H1 (cell line): ENCODE measurements at regions of chr7 and their contacts with region 1.

Region 1: DNA sequence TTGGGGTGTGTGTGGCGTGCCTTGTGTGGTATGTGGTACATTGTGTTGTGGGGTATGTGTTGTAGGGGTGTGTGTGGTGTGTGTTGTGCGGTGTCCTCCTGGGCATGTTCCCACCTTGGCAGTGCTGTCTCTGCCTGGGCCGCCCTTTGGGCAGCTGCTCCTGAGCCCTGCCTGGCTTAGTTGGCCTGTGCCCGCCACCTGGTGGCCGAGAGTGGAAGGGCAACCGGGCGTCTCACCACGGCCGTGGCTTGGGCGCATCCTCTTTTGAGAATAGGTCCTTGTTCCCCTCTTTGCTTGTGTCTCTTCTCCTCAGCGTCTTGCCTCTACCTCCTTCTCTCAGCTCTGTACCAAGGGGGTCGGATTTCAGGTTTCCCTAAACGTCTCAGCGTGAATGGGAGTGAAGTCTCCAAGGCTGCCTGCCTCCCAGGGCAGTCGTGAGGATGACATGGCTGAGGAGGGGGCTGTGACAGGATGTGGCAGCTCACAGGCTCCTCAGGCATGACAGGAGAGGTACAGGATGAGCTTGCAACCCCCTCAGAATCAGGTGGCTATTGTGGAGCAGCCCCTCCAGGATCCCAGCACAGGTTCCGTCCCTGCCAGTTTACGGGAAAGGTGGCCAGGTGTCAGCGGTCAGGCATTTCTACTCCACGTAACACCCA is 98.4 kb upstream of the PODXL start:
- DNase-seq: peak; percentile 70 to 100
- H3K4me3 ChIP-seq: peak overlapping the region in 1 of 4 experiments; percentile 9; a peak in 1 of 8 replicates
- H3K27ac ChIP-seq: no peak overlapping the region
- H3K4me1 ChIP-seq: peaks cover 7 to 30% (median 13%) of the 10 kb centered on the region in 4 experiments
- H3K27me3 ChIP-seq: no peaks in the 10 kb centered on the region
- CTCF ChIP-seq: peak; percentile 98 to 99 (median 98)
- EP300 ChIP-seq: no peak
- POLR2A ChIP-seq: no peak
- RAD21 ChIP-seq: peak; percentile 97 to 98

Region 2: DNA sequence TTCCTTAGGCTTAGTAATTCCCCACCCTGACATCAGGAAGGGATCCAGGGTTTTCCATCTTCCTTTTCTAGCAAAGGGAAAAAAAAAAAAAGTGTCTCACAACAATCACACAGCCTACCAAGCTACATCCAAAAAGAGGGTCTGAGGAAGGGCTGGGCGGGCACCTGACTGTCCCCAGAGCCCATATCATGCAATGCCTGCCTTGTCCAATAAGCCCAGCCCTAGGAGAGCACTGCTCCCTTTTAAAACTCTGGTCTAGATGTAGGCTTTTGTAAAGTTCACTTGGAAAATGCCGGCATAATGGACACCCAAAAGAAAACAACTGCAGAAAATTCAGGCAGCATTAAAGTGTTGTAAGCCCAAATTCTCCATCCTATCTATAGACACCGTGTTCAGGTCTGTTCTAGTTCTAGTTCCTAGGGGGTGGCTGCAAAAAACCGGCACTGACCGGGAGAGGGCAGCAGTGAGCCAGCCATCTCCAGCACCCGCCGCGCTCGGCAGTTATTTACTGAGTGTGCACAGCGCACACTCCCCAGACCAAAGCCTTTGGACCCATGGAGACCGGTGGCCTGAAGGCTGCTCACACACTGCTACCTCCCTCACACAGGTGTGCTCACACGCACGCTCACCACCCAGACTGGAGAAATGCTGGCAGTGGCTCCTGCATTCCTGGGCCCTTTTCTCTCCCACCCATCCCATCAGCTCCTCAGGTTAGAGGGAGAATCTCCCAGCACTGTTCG is 147.0 kb before region 1 on chr7:
- CTCF ChIA-PET with region 1: interaction called, 40 read pairs
- POLR2A ChIA-PET with region 1: interaction called, 4 read pairs
- DNase-seq: peak in 1 of 2 experiments; percentile 76
- H3K4me3 ChIP-seq: no peak overlapping the region
- H3K27ac ChIP-seq: peak overlapping the region; percentile 50; the same call in 1 of the 2 replicates
- H3K4me1 ChIP-seq: peaks cover 0 to 7% (median 3%) of the 10 kb centered on the region in 4 experiments; a peak in 4 of 7 replicates
- H3K27me3 ChIP-seq: no peaks in the 10 kb centered on the region
- CTCF ChIP-seq: peak; percentile 50 to 61 (median 60); a peak in 3 of 4 replicates
- EP300 ChIP-seq: no peak
- POLR2A ChIP-seq: peak; percentile 13 to 38; a peak in 2 of 3 replicates
- RAD21 ChIP-seq: peak; percentile 56 to 59

Region 3: DNA sequence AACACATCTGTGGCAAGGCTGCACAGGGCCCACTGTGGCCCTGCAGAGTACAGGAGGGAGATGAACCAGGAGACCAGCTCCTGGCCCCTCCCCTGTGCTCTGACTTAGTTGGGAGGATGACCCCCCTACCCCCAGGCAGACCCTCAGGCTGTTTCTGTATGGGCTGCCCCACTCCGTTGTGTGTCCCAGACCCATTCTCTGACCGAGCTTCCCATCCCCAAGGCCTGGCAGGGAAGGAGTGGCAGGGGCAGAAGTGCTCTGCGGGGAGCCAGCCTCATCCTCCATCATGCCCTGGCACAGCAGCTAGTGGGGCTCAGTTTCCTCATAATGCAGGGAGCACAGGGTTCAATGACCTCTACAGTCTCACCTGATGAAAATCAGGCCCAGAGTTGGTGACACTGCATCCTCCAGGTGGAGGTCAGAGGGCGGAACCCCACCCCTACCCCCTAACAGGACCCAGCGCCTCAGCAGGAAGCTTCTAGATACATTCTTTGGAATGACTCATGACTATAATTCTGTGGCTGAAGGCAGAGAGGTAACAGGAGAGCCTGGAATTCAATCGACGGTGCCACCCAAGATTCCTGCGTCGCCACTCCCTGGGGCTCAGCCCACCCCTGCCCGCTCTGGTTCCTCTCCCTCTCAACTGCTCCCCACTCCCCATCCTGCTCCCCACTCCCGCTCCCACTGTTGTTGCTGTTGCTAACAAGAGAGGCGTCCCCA is 116.6 kb before region 1 on chr7:
- CTCF ChIA-PET with region 1: interaction called, 164 read pairs
- POLR2A ChIA-PET with region 1: interaction called, 3 read pairs
- DNase-seq: no peak
- H3K4me3 ChIP-seq: no peak overlapping the region
- H3K27ac ChIP-seq: peak overlapping the region; percentile 47; the same call in 1 of the 2 replicates
- H3K4me1 ChIP-seq: peaks cover 20 to 67% (median 39%) of the 10 kb centered on the region in 4 experiments
- H3K27me3 ChIP-seq: no peaks in the 10 kb centered on the region
- CTCF ChIP-seq: no peak
- EP300 ChIP-seq: no peak
- POLR2A ChIP-seq: peak in 1 of 2 experiments; percentile 28; a peak in 1 of 3 replicates
- RAD21 ChIP-seq: no peak

Region 4: DNA sequence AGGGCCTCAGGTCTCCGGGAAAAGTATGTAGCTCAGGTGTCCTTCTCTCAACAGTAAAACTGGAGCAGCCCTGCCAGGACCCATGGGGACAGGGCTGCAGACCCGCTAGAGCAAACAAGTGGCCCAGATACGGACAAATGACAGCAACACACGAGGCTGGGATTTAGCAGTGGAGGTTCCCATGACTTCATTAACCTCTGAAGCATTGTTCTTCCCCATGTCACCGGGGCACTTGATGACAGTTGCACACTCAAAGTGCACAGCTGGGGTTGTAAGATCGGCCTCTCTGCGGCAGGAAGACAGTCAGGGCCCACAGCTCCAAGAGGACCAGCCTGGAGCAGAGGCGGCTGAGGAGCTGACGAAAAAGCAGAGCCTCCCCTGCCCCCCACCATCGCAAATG is 85.8 kb before region 1 on chr7:
- CTCF ChIA-PET with region 1: interaction called, 25 read pairs
- POLR2A ChIA-PET with region 1: no interaction called
- DNase-seq: no peak
- H3K4me3 ChIP-seq: no peak overlapping the region
- H3K27ac ChIP-seq: no peak overlapping the region
- H3K4me1 ChIP-seq: peaks cover 0 to 3% (median 2%) of the 10 kb centered on the region in 4 experiments; a peak in 2 of 7 replicates
- H3K27me3 ChIP-seq: no peaks in the 10 kb centered on the region
- CTCF ChIP-seq: no peak
- EP300 ChIP-seq: no peak
- POLR2A ChIP-seq: no peak
- RAD21 ChIP-seq: no peak

Region 5: GRCh38 chr7:131604841-131605279 is 49.9 kb before region 1 on chr7:
- CTCF ChIA-PET with region 1: interaction called, 17 read pairs
- POLR2A ChIA-PET with region 1: interaction called, 18 read pairs
- DNase-seq: peak in 1 of 2 experiments; percentile 88
- H3K4me3 ChIP-seq: peak overlapping the region; percentile 6 to 47 (median 11); a peak in 5 of 8 replicates
- H3K27ac ChIP-seq: peak overlapping the region; percentile 96
- H3K4me1 ChIP-seq: peaks cover 27 to 51% (median 45%) of the 10 kb centered on the region in 4 experiments
- H3K27me3 ChIP-seq: no peaks in the 10 kb centered on the region
- CTCF ChIP-seq: no peak
- EP300 ChIP-seq: no peak
- POLR2A ChIP-seq: peak in 1 of 2 experiments; percentile 13; a peak in 2 of 3 replicates
- RAD21 ChIP-seq: no peak